HEK293T (cell line): ENCODE measurements at regions of chrX and their contacts with region 1.

Region 1: DNA sequence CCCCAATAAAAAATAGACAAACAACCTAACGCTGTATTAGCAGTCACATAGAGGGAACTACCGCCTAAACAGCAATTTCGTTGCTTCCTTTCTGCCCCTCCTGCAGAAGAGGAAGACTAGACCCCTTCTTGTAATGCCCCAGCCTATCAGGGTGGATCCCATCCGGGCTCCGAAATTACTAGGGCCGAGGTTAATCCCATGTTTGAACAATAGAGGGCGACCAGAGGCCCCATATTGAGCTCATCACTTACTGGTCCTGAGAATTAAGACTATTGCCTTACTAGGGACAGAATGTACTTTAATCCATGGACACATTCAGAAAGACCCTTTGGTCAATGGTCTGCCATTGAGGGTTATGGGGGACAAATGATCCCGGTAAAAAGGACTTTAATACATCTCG is 11.8 kb upstream of the ZNF630 start:
- DNase-seq: peak; percentile 72

Region 2: DNA sequence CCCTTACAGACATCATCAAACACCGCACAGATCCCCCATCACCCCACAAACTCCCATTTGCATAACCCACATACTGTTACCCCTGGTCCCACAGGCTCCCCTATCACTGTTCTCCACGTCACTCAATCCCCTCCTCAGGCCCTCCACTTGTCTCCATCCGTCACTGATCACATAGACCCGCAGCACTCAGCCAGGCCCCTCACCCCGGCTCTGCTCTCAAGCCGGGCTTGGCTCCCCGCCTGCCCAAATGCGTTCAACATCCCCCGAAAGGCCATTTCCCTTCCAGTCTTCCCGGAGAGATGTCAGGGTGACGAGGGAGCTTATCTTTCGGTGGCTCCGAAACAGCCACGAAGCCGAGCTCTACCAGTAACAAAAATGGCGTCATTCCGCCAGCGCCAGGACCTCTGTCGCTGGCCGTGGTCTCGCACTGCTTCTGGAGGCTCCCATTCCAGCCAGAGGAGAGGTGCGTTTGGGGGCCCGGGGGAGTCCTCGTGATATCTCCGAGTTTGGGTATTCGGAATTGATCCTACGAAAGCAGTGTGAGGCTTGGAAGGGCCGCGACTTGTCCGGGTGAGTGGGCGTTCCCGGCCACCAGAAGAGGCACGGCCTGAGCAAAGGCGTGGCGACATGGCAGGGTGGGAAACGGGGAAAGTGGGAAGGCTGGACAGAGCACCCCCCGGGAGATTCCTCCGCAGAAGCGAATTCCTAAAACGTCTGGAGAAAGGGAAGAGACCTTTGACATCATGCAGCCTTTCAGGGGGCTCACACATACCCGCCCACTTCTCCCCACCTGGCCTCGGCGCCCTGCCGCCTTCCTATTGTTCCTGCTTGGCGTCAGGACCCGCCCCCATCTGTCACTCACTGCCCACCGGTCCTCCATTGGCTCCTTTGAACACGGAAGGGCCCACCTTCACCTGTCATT is 11.9 kb before region 1 on chrX and contains the start of gene ZNF630:
- CTCF ChIA-PET with region 1: no interaction called
- POLR2A ChIA-PET with region 1: no interaction called
- DNase-seq: peak; percentile 74

Region 3: GRCh38 chrX:48101443-48101842 is 18.2 kb after region 1 on chrX:
- CTCF ChIA-PET with region 1: no interaction called
- POLR2A ChIA-PET with region 1: no interaction called
- DNase-seq: no peak

Region 4: GRCh38 chrX:48493890-48494364 is 410.7 kb after region 1 on chrX:
- CTCF ChIA-PET with region 1: interaction called, 13 read pairs
- POLR2A ChIA-PET with region 1: no interaction called
- DNase-seq: peak; percentile 46